Activated T-helper 2 cell treated with anti-CD3 and anti-CD28 coated beads, Interferon-gamma antibody, Interleukin-2, Interleukin-4, amounts not matched to agents 10 μg/mL and 5 μg/mL and 100 μg/mL, durations not matched to agents 14 hours and 24 hours and 36 hours (primary cell): ENCODE measurements at regions of chrX and their contacts with region 1.

Region 1: GRCh38 chrX:3651276-3651675 is 62.2 kb downstream of the PRKX start:
- DNase-seq: no peak
- H3K4me3 Mint-ChIP-seq: no peak overlapping the region
- H3K27ac Mint-ChIP-seq: no peak overlapping the region
- H3K4me1 Mint-ChIP-seq: peaks cover 2% of the 10 kb centered on the region
- H3K27me3 Mint-ChIP-seq: no peaks in the 10 kb centered on the region

Region 2: GRCh38 chrX:3621414-3621813 is 29.9 kb before region 1 on chrX:
- intact Hi-C with region 1: no loop called
- DNase-seq: no peak
- H3K4me3 Mint-ChIP-seq: no peak overlapping the region
- H3K27ac Mint-ChIP-seq: no peak overlapping the region
- H3K4me1 Mint-ChIP-seq: peaks cover 2% of the 10 kb centered on the region
- H3K27me3 Mint-ChIP-seq: no peaks in the 10 kb centered on the region

Region 3: GRCh38 chrX:3697701-3698279 is 46.5 kb after region 1 on chrX:
- intact Hi-C with region 1: no loop called
- DNase-seq: no peak
- H3K4me3 Mint-ChIP-seq: no peak overlapping the region
- H3K27ac Mint-ChIP-seq: peak overlapping the region; percentile 55
- H3K4me1 Mint-ChIP-seq: peaks cover 53% of the 10 kb centered on the region
- H3K27me3 Mint-ChIP-seq: no peaks in the 10 kb centered on the region

Region 4: DNA sequence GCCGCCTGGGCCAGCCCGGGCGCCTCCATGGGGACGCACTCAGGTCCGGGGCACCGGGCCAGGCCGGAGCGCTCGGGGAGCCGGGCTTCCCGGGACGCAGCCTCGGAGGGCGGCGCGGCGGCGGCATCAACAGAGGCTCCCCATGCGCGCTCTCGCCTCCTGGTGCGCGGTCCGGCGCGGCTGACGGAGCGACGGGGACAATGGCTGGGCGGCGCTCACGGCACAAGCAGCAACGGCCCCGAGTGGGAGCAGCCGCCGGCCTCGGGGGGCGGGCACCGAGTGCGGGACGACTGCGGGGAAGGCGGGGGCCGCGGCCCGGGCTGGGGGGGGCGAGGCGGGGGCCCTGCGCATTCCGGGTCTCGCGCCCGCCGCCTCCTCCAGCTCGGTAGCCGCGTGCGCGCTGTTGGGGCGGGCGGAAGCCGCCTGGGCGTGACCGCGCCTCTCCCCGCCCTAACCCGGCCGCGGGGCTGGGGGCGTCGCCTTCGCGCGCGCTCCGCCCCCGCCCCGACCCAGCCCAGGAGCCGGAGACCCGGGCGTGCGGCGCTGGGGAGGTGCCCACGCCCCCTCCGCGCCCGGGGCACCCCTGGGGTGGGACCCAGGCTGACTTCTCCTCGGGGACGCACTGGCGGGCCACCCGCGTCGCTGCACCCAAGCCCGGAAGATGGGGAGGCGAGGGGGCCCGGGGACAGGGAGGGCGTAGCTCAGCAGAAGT is 62.1 kb after region 1 on chrX and contains the start of gene PRKX:
- intact Hi-C with region 1: loop called (anchors 5 kb)
- DNase-seq: peak; percentile 64
- H3K4me3 Mint-ChIP-seq: peak within 1 kb of the TSS; percentile 96
- H3K27ac Mint-ChIP-seq: peak within 1 kb of the TSS; percentile 91
- H3K4me1 Mint-ChIP-seq: peaks cover 8% of the 10 kb centered on the region
- H3K27me3 Mint-ChIP-seq: no peaks in the 10 kb centered on the region
- total RNA-seq, gene PRKX: 116 and 117 TPM in 2 replicates

Region 5: GRCh38 chrX:3788509-3789233 is 137.4 kb after region 1 on chrX:
- intact Hi-C with region 1: loop called (anchors 10 kb)
- DNase-seq: no peak
- H3K4me3 Mint-ChIP-seq: no peak overlapping the region
- H3K27ac Mint-ChIP-seq: no peak overlapping the region
- H3K4me1 Mint-ChIP-seq: peaks cover 8% of the 10 kb centered on the region
- H3K27me3 Mint-ChIP-seq: peaks cover 10% of the 10 kb centered on the region

Region 6: GRCh38 chrX:3811331-3812311 is 160.3 kb after region 1 on chrX:
- intact Hi-C with region 1: loop called (anchors 1 kb)
- DNase-seq: peak; percentile 22
- H3K4me3 Mint-ChIP-seq: peak overlapping the region; percentile 5
- H3K27ac Mint-ChIP-seq: peak overlapping the region; percentile 66
- H3K4me1 Mint-ChIP-seq: peaks cover 15% of the 10 kb centered on the region
- H3K27me3 Mint-ChIP-seq: peaks cover 27% of the 10 kb centered on the region